ENCODE measurements at regions of chr3 and their contacts with region 1.

Region 1: DNA sequence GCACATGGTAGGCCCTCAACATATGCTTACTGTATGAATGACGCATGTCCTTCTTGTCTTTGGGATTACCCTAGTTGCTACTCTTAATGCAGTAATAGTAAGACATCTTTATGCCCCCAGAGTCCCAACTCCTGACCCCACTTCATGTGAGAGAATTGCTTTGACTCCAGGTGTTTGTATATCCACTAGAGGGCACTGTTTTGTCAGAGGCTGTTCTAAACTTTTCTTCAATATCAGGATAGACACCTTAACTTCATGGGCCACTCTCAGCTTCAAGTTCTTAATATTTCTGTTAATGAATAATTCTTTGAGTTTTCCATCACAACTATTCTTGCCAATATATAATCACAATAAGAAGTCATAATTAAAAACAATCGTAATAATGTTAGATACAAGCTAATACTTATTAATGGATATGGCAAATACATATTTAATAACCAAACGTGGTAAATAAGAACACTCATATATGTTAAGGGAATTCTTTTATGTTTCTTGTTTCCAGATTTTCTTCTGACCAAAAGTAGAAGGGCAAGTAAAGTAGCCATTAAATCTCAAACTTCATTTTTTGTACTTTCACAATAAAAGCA is 337.2 kb upstream of the DNAJC19 start:
- DNase-seq: no peak
- H3K4me3 ChIP-seq: no peak overlapping the region
- H3K27ac ChIP-seq: no peak overlapping the region
- H3K4me1 ChIP-seq: no peaks in the 10 kb centered on the region
- H3K27me3 ChIP-seq: no peaks in the 10 kb centered on the region
- CTCF ChIP-seq: peak; percentile 68

Region 2: DNA sequence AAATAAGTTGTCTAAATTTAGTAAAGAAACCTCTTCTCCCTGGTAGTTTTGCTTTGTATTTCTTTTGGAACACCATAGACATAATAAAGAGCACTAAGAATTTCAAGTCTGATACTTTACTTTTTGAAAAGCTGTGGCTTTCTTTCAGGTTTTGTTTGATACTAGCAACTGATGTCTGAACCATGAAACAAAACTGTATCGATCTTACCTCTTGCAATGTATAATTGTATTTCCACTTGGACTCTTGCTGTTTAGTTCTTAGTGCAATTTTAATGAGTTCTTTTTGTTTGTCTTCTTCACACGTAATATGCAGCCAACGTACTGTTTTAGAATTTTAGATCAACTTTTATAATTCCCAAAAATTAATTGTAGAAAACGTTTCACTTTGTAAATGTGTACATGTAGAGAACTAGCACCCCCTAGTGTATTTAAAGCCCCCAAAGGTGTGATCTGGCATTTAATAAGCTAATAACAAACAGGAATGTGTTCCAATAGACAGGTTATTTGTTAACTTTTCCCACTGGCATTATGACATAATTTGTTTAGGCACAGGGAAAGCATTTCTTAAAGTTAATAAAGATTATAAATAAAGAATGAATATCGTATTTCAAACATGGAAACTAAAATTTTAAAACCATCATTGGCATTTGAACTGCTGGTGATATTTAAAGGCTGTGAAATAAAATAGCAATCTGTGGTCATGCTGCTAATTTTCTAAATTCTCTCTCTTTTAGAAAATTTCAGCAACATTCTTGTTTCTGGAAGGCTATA is 48.1 kb before region 1 on chr3:
- intact Hi-C with region 1: no loop called
- DNase-seq: no peak
- H3K4me3 ChIP-seq: no peak overlapping the region
- H3K27ac ChIP-seq: no peak overlapping the region
- H3K4me1 ChIP-seq: no peaks in the 10 kb centered on the region
- H3K27me3 ChIP-seq: peaks cover 5% of the 10 kb centered on the region
- CTCF ChIP-seq: peak; percentile 47

Region 3: GRCh38 chr3:181694805-181695660 is 368.3 kb after region 1 on chr3:
- intact Hi-C with region 1: loop called (anchors 5 kb)
- DNase-seq: peak; percentile 40
- H3K4me3 ChIP-seq: peak overlapping the region; percentile 62
- H3K27ac ChIP-seq: peak overlapping the region; percentile 14
- H3K4me1 ChIP-seq: peaks cover 16% of the 10 kb centered on the region
- H3K27me3 ChIP-seq: peaks cover 70% of the 10 kb centered on the region
- CTCF ChIP-seq: peak; percentile 29